HepG2 (cell line): ENCODE measurements at regions of chr18 and their contacts with region 1.

Region 1: GRCh38 chr18:28176933-28177827 is at the start of gene CDH2:
- DNase-seq: peak; percentile 77
- ATAC-seq: peak; percentile 60
- H3K4me3 ChIP-seq: peak within 1 kb of the TSS; percentile 85 to 96 (median 88)
- H3K27ac ChIP-seq: peak within 1 kb of the TSS; percentile 68
- H3K4me1 ChIP-seq: peaks cover 32% of the 10 kb centered on the region
- H3K27me3 ChIP-seq: no peaks in the 10 kb centered on the region; a peak in 1 of 5 replicates
- CTCF ChIP-seq: peak; percentile 36; the same call in 1 of the 2 replicates
- EP300 ChIP-seq: no peak
- POLR2A ChIP-seq: peak in 1 of 2 experiments; percentile 55; a peak in 2 of 4 replicates
- RAD21 ChIP-seq: peak; percentile 13; the same call in 1 of the 2 replicates
- total RNA-seq, gene CDH2: 14.6 and 18.6 TPM in 2 replicates

Region 2: GRCh38 chr18:27605107-27605834 is 571.9 kb before region 1 on chr18:
- CTCF ChIA-PET with region 1: no interaction called
- POLR2A ChIA-PET with region 1: no interaction called
- in situ Hi-C with region 1: loop called (anchors 25 kb)
- intact Hi-C with region 1: no loop called
- DNase-seq: peak; percentile 53
- ATAC-seq: peak; percentile 92
- H3K4me3 ChIP-seq: no peak overlapping the region
- H3K27ac ChIP-seq: no peak overlapping the region
- H3K4me1 ChIP-seq: no peaks in the 10 kb centered on the region
- H3K27me3 ChIP-seq: no peaks in the 10 kb centered on the region
- CTCF ChIP-seq: peak; percentile 85
- EP300 ChIP-seq: no peak
- POLR2A ChIP-seq: no peak
- RAD21 ChIP-seq: 0 out of 2 replicates have a peak, but pooled peaks have one; percentile 21

Region 3: GRCh38 chr18:27778441-27778840 is 398.7 kb before region 1 on chr18:
- CTCF ChIA-PET with region 1: no interaction called
- POLR2A ChIA-PET with region 1: no interaction called
- in situ Hi-C with region 1: loop called (anchors 25 kb)
- intact Hi-C with region 1: no loop called
- DNase-seq: no peak
- ATAC-seq: no peak
- H3K4me3 ChIP-seq: no peak overlapping the region
- H3K27ac ChIP-seq: no peak overlapping the region
- H3K4me1 ChIP-seq: no peaks in the 10 kb centered on the region
- H3K27me3 ChIP-seq: no peaks in the 10 kb centered on the region; a peak in 1 of 5 replicates
- CTCF ChIP-seq: 0 out of 2 replicates have a peak, but pooled peaks have one; percentile 17
- EP300 ChIP-seq: no peak
- POLR2A ChIP-seq: no peak
- RAD21 ChIP-seq: no peak

Region 4: GRCh38 chr18:28071199-28071598 is 106.0 kb before region 1 on chr18:
- CTCF ChIA-PET with region 1: no interaction called
- POLR2A ChIA-PET with region 1: no interaction called
- in situ Hi-C with region 1: no loop called
- intact Hi-C with region 1: loop called (anchors 5 kb)
- DNase-seq: no peak
- ATAC-seq: no peak
- H3K4me3 ChIP-seq: no peak overlapping the region
- H3K27ac ChIP-seq: no peak overlapping the region
- H3K4me1 ChIP-seq: peaks cover 37% of the 10 kb centered on the region
- H3K27me3 ChIP-seq: no peaks in the 10 kb centered on the region
- CTCF ChIP-seq: no peak
- EP300 ChIP-seq: no peak
- POLR2A ChIP-seq: no peak
- RAD21 ChIP-seq: no peak

Region 5: DNA sequence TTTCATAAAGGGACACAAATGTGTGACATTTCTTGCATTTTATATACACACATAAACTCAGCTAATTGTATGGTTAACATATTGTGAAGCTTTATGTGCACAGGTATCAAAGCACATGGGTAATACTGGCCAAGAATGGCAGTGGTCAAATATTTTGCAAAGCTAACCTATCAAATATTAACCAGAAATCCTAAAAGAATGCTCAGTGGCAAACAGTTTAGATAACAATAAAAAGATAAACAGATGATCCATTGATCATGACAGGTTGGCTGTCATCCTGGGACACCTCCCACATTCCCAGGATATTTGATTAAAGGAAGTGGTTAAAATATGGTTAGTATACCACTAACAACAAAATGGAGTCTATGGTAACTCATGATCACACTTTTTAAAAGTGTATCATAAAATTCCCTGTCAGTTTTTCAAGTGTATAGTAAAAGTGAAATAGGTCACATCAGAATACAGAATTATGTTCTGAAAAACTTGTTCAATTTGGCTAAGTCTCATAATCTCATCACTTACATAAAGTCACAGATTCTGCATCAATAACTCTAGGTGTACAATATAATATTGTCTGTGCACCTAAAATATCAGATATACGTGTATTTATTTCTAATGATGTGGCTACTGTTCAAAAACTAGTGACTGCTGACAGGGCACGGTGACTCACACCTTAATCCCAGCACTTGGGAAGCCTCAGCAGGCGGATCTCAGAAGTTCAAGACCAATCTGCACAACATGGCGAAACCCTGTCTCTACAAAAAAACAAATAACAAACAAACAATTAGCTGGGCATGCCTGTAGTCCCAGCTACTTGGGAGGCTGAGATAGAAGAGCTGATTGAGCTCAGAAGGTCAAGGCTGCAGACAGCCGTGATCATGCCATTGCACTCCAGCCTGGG is 49.2 kb before region 1 on chr18:
- CTCF ChIA-PET with region 1: no interaction called
- POLR2A ChIA-PET with region 1: interaction called, 24 read pairs
- in situ Hi-C with region 1: no loop called
- intact Hi-C with region 1: loop called (anchors 2 kb)
- DNase-seq: peak; percentile 92
- ATAC-seq: peak; percentile 93
- H3K4me3 ChIP-seq: peak overlapping the region in 2 of 3 experiments; percentile 14 to 54; a peak in 3 of 6 replicates
- H3K27ac ChIP-seq: peak overlapping the region; percentile 65
- H3K4me1 ChIP-seq: peaks cover 60% of the 10 kb centered on the region
- H3K27me3 ChIP-seq: no peaks in the 10 kb centered on the region
- CTCF ChIP-seq: no peak
- EP300 ChIP-seq: peak; percentile 4 to 94; a peak in 2 of 4 replicates
- POLR2A ChIP-seq: no peak
- RAD21 ChIP-seq: no peak

Region 6: DNA sequence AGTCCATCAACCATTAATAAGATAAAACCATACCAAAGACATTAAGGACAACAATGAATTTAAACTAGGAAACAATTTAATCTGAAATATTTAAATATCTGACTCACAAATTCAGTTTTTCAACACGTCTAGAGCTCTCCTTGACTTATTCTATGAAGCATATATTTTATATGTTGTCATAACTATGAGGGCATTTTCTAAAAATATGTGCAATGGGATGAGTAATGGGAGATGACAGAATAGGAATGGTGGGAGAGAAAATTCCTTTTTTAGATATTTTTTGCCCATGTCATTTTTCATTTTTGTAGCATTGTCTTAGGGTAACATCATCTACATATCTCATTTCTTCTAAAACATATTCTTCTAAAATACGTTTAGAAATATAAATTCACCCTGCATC is 79.0 kb after region 1 on chr18:
- CTCF ChIA-PET with region 1: no interaction called
- POLR2A ChIA-PET with region 1: no interaction called
- in situ Hi-C with region 1: no loop called
- intact Hi-C with region 1: no loop called
- DNase-seq: no peak
- ATAC-seq: no peak
- H3K4me3 ChIP-seq: no peak overlapping the region
- H3K27ac ChIP-seq: no peak overlapping the region
- H3K4me1 ChIP-seq: no peaks in the 10 kb centered on the region
- H3K27me3 ChIP-seq: no peaks in the 10 kb centered on the region
- CTCF ChIP-seq: no peak
- EP300 ChIP-seq: no peak
- POLR2A ChIP-seq: no peak
- RAD21 ChIP-seq: no peak